K562 (cell line): ENCODE measurements at regions of chr5 and their contacts with region 1.

Region 1: DNA sequence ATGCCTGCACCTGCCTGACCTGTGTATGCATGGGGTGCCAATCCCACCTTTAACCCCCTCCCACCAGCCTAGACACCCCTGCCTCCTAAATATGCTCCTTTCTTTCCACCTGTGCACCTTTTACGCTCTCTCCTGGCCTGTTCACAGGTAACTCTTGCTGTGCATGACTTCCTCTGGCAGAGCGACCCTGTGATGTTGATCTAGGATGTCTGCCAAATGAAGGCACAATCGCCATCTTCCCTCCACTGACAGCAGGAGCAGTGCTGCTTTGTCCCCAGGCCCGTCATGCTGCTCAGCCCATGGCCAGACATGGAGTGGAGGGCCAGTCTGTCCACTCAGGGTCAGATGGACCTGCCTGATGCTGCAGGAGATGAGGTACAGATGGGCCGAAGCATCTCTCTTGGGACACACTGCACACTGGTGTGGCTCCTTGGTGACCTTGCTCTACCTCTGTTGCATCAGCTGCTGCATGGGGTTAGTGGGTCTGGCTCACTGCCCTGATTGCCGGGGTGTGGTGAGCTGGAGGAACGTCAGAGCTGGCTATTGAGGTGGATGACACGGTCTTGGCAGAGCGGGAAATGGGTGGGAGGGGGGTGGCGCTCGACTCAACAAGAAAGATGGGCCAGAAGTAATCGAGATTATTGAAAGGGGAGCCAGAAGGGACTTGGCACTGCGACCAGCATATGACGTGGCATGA is 101.7 kb upstream of the PITX1 start:
- DNase-seq: peak; percentile 52 to 74 (median 59)
- ATAC-seq: peak; percentile 61
- H3K4me3 ChIP-seq: no peak overlapping the region
- H3K27ac ChIP-seq: no peak overlapping the region; the same call in 2 of the 3 replicates
- H3K4me1 ChIP-seq: peaks cover 58 to 68% of the 10 kb centered on the region in 2 experiments
- H3K27me3 ChIP-seq: no peaks in the 10 kb centered on the region
- CTCF ChIP-seq: no peak
- EP300 ChIP-seq: peak; percentile 77
- POLR2A ChIP-seq: no peak
- RAD21 ChIP-seq: peak in 1 of 2 experiments; percentile 25; a peak in 1 of 4 replicates

Region 2: GRCh38 chr5:134018154-134018985 is 1117.3 kb before region 1 on chr5:
- CTCF ChIA-PET with region 1: no interaction called
- POLR2A ChIA-PET with region 1: no interaction called
- in situ Hi-C with region 1: no loop called
- intact Hi-C with region 1: no loop called
- DNase-seq: peak in 2 of 4 experiments; percentile 38 to 42
- ATAC-seq: peak; percentile 59
- H3K4me3 ChIP-seq: no peak overlapping the region
- H3K27ac ChIP-seq: no peak overlapping the region
- H3K4me1 ChIP-seq: peaks cover 0 to 4% of the 10 kb centered on the region in 2 experiments; a peak in 3 of 5 replicates
- H3K27me3 ChIP-seq: peaks cover 24 to 45% of the 10 kb centered on the region in 2 experiments; a peak in 4 of 5 replicates
- CTCF ChIP-seq: no peak
- EP300 ChIP-seq: peak; percentile 28; the same call in 1 of the 2 replicates
- POLR2A ChIP-seq: no peak
- RAD21 ChIP-seq: no peak

Region 3: DNA sequence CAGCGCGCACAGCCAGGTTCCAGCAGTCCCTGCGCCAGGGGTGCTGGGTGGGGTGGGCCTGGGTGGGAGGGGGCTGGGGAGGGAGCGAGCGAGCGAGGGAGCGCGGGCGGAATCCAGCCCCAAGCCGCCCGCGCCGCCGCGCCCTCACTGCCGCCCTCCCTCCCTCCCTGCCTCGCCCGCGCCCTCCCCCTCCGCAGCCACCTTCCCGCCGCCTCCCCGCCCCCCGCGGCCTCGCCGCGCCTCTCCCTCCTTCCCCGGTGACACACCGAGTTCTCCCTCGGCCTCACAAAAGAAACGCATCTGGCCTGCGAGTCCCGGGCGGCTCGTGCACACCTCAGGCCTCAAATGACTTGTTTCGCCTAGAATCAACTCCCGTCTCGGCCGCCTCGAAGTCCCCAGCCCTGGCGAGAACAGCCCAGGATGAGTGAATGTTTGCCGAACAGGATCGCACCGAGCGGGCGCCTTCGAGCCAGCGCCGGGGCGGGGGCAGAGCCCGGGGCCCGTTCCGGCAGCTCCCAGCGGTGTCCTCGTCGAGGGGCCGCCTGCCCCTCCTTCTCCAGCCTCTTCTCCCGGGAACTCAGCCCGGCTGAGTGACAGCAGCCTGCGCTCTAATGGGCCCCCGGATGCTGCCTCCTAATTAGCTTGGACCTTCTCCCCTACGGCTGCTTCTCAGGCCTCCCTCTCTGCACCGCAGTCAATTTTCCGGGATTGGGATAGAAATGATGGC is 101.3 kb before region 1 on chr5:
- CTCF ChIA-PET with region 1: no interaction called
- POLR2A ChIA-PET with region 1: interaction called, 7 read pairs
- in situ Hi-C with region 1: no loop called
- intact Hi-C with region 1: loop called (anchors 2 kb)
- DNase-seq: peak; percentile 93 to 96 (median 94)
- ATAC-seq: peak; percentile 84
- H3K4me3 ChIP-seq: peak overlapping the region; percentile 99
- H3K27ac ChIP-seq: peak overlapping the region; percentile 98
- H3K4me1 ChIP-seq: peaks cover 19 to 45% of the 10 kb centered on the region in 2 experiments
- H3K27me3 ChIP-seq: no peaks in the 10 kb centered on the region
- CTCF ChIP-seq: no peak
- EP300 ChIP-seq: no peak
- POLR2A ChIP-seq: peak; percentile 80
- RAD21 ChIP-seq: no peak

Region 4: DNA sequence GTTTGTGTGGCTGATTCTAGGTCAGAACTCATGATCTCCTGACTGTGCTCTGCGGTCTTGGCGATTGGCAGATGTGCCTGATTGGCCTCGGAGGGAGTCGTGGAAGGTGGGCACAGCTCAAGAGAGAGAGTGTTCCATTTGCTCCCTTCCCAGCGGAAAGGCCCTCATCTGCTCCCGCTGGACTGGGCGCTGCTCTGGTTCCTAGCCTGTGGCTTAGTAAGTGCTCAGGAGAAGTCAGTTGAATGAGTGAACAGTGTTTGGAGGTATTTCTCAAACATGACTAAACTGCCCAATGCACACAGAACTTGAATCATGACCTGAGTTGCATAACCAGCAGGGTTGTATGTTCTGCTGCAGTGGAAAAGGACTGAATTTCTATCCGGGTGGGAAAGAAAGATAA is 18.5 kb after region 1 on chr5:
- CTCF ChIA-PET with region 1: no interaction called
- POLR2A ChIA-PET with region 1: interaction called, 5 read pairs
- in situ Hi-C with region 1: no loop called
- intact Hi-C with region 1: loop called (anchors 2 kb)
- DNase-seq: no peak
- ATAC-seq: no peak
- H3K4me3 ChIP-seq: no peak overlapping the region
- H3K27ac ChIP-seq: no peak overlapping the region; the same call in 2 of the 3 replicates
- H3K4me1 ChIP-seq: peaks cover 25 to 33% of the 10 kb centered on the region in 2 experiments; a peak in 4 of 5 replicates
- H3K27me3 ChIP-seq: no peaks in the 10 kb centered on the region
- CTCF ChIP-seq: no peak
- EP300 ChIP-seq: no peak
- POLR2A ChIP-seq: no peak
- RAD21 ChIP-seq: no peak

Region 5: GRCh38 chr5:135174315-135175096 is 38.8 kb after region 1 on chr5:
- CTCF ChIA-PET with region 1: no interaction called
- POLR2A ChIA-PET with region 1: interaction called, 7 read pairs
- in situ Hi-C with region 1: no loop called
- intact Hi-C with region 1: loop called (anchors 1 kb)
- DNase-seq: peak; percentile 68 to 79 (median 74)
- ATAC-seq: peak; percentile 90
- H3K4me3 ChIP-seq: peak overlapping the region; percentile 16; the same call in 1 of the 2 replicates
- H3K27ac ChIP-seq: peak overlapping the region; percentile 67
- H3K4me1 ChIP-seq: peaks cover 27 to 39% of the 10 kb centered on the region in 2 experiments; a peak in 4 of 5 replicates
- H3K27me3 ChIP-seq: no peaks in the 10 kb centered on the region
- CTCF ChIP-seq: peak; percentile 86 to 96 (median 92)
- EP300 ChIP-seq: no peak
- POLR2A ChIP-seq: no peak
- RAD21 ChIP-seq: peak; percentile 64 to 82

Region 6: DNA sequence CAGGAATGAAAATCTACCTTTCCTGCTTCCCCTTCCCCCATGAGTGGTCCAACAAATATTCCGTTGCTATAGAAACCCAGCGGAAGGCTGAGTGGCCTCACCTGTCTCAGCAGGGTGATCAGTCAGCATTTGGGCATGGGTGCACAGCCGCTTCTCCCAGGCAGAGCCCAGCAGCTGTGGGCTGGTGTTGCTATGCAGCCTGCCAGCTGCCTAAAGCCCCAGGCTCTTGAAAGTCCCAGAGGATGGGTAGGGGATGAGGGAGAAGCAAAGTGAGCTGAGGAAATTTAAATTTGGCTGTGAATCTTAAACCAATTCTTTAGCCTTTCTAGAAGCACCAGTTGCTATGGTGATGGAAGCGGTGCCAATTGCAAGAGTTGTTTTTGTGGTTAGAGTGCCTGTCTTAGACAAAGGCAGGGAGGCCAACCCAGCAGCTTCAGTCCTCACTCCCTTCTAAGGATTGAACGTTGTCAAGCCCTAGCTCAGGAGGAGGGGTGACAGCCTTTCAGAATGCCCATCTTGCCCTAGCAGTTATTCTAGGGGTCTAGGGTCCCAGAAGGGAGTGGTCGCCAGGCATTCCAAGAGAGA is 49.9 kb after region 1 on chr5:
- CTCF ChIA-PET with region 1: no interaction called
- POLR2A ChIA-PET with region 1: no interaction called
- in situ Hi-C with region 1: no loop called
- intact Hi-C with region 1: loop called (anchors 5 kb)
- DNase-seq: no peak
- ATAC-seq: no peak
- H3K4me3 ChIP-seq: no peak overlapping the region
- H3K27ac ChIP-seq: no peak overlapping the region
- H3K4me1 ChIP-seq: peaks cover 10 to 15% of the 10 kb centered on the region in 2 experiments; a peak in 4 of 5 replicates
- H3K27me3 ChIP-seq: no peaks in the 10 kb centered on the region
- CTCF ChIP-seq: no peak
- EP300 ChIP-seq: no peak
- POLR2A ChIP-seq: no peak
- RAD21 ChIP-seq: no peak